ENCODE measurements at regions of chr6 and their contacts with region 1.

Region 1: GRCh38 chr6:33771146-33772081 is 17.5 kb downstream of the LEMD2 start:
- DNase-seq: peak; percentile 86
- ATAC-seq: peak; percentile 81
- H3K4me3 Mint-ChIP-seq: 0 out of 2 replicates have a peak overlapping the region, but pooled peaks have one; percentile 6
- H3K27ac Mint-ChIP-seq: peak overlapping the region; percentile 70
- H3K4me1 Mint-ChIP-seq: peaks cover 32% of the 10 kb centered on the region
- H3K27me3 Mint-ChIP-seq: no peaks in the 10 kb centered on the region
- CTCF ChIP-seq: peak; percentile 86

Region 2: GRCh38 chr6:33620856-33621710 is 150.3 kb before region 1 on chr6 and contains the start of gene ITPR3:
- CTCF ChIA-PET with region 1: no interaction called
- POLR2A ChIA-PET with region 1: no interaction called
- DNase-seq: no peak
- ATAC-seq: peak; percentile 47
- H3K4me3 Mint-ChIP-seq: peak within 1 kb of the TSS; percentile 91
- H3K27ac Mint-ChIP-seq: no peak within 1 kb of the TSS; the same call in 1 of the 2 replicates
- H3K4me1 Mint-ChIP-seq: peaks cover 46% of the 10 kb centered on the region
- H3K27me3 Mint-ChIP-seq: peaks cover 15% of the 10 kb centered on the region
- CTCF ChIP-seq: no peak
- total RNA-seq, gene ITPR3: 42.5 to 47.3 TPM (median 42.9 TPM) in 3 replicates

Region 3: GRCh38 chr6:33744001-33744848 is 27.2 kb before region 1 on chr6:
- CTCF ChIA-PET with region 1: interaction called, 26 read pairs
- POLR2A ChIA-PET with region 1: interaction called, 3 read pairs
- DNase-seq: peak; percentile 84
- ATAC-seq: peak; percentile 79
- H3K4me3 Mint-ChIP-seq: no peak overlapping the region
- H3K27ac Mint-ChIP-seq: no peak overlapping the region
- H3K4me1 Mint-ChIP-seq: peaks cover 48% of the 10 kb centered on the region
- H3K27me3 Mint-ChIP-seq: no peaks in the 10 kb centered on the region; the same call in 1 of the 2 replicates
- CTCF ChIP-seq: peak; percentile 79

Region 4: GRCh38 chr6:33794891-33795623 is 23.6 kb after region 1 on chr6:
- CTCF ChIA-PET with region 1: interaction called, 38 read pairs
- POLR2A ChIA-PET with region 1: no interaction called
- DNase-seq: no peak
- ATAC-seq: peak; percentile 36
- H3K4me3 Mint-ChIP-seq: no peak overlapping the region
- H3K27ac Mint-ChIP-seq: peak overlapping the region; percentile 41; the same call in 1 of the 2 replicates
- H3K4me1 Mint-ChIP-seq: peaks cover 72% of the 10 kb centered on the region
- H3K27me3 Mint-ChIP-seq: no peaks in the 10 kb centered on the region; the same call in 1 of the 2 replicates
- CTCF ChIP-seq: no peak

Region 5: DNA sequence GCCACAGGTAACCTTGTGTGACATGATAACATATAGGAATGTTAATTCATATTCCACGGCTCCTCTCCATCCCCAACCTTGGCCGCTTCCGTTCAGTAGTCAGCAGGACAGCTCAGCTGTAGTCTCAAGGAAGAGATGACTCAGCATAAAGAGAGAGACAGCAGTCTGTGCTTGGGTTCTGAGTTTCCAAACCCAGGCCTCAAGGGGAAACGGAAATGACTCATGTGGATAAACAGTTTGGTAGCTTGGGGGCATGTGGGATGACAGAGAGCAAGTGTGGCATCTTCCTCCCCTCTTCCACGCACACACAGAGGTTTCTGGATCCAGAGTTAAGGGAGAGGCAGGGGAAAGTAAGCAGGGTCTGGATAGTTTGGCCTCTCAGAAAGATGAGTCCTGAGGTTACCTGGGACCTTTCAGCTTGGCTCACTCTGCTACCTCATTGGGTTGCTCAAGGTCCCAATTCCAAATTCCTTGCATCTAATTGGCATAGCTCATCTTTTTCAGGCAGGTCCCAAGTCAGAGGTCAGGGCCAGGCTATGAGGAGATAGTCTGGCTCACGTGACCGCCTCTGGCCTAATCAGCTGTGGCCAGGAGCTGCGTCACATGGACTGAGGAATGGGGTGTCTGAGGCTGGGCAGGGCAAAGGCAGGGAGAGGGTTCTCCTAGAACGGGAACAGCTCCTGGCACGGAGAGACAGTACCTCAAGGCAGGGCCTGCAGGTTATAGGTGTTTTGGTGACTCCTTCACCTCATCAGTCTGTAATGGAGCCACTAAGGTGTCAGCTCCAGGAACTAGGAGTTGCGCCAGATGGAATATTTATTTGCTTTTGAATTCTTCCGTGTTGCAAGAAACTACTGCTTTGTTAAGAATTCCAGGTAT is 68.9 kb after region 1 on chr6:
- CTCF ChIA-PET with region 1: interaction called, 37 read pairs
- POLR2A ChIA-PET with region 1: no interaction called
- DNase-seq: no peak
- ATAC-seq: no peak
- H3K4me3 Mint-ChIP-seq: no peak overlapping the region
- H3K27ac Mint-ChIP-seq: peak overlapping the region; percentile 16
- H3K4me1 Mint-ChIP-seq: peaks cover 30% of the 10 kb centered on the region
- H3K27me3 Mint-ChIP-seq: peaks cover 19% of the 10 kb centered on the region
- CTCF ChIP-seq: no peak

Region 6: GRCh38 chr6:33958526-33959333 is 187.3 kb after region 1 on chr6:
- CTCF ChIA-PET with region 1: interaction called, 32 read pairs
- POLR2A ChIA-PET with region 1: no interaction called
- DNase-seq: peak; percentile 75
- ATAC-seq: peak; percentile 74
- H3K4me3 Mint-ChIP-seq: no peak overlapping the region
- H3K27ac Mint-ChIP-seq: no peak overlapping the region
- H3K4me1 Mint-ChIP-seq: peaks cover 24% of the 10 kb centered on the region
- H3K27me3 Mint-ChIP-seq: peaks cover 3% of the 10 kb centered on the region
- CTCF ChIP-seq: peak; percentile 57

Region 7: DNA sequence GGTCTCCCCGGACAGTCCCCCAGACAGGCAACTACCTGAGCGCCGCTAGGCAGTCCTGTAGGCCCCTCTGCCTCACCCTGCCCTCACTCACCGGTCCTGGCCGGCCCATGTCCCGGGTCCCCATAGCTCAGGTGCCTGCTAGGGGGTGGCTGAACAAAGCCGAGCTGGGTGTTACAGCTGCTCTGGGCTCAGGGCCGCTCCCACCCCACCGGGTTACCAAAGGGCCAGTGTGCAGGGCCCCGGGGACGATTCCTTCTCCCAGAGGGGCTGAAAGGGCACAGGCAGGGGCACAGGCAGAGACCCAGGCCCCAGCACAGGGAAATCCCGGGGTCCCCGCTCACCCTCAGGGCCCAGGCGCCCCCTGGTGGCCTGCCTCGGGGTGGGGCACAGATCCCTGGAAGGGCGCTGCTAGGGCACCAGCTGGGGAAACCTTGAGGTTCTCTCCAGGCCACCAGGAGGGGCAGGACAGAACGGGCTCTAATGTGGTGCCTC is 256.1 kb after region 1 on chr6:
- CTCF ChIA-PET with region 1: interaction called, 54 read pairs
- POLR2A ChIA-PET with region 1: interaction called, 3 read pairs
- DNase-seq: peak; percentile 85
- ATAC-seq: peak; percentile 85
- H3K4me3 Mint-ChIP-seq: no peak overlapping the region
- H3K27ac Mint-ChIP-seq: no peak overlapping the region
- H3K4me1 Mint-ChIP-seq: no peaks in the 10 kb centered on the region
- H3K27me3 Mint-ChIP-seq: no peaks in the 10 kb centered on the region
- CTCF ChIP-seq: peak; percentile 86